Mucosa of descending colon (tissue), 3 donors: ENCODE measurements at regions of chr19 and their contacts with region 1.

Region 1: DNA sequence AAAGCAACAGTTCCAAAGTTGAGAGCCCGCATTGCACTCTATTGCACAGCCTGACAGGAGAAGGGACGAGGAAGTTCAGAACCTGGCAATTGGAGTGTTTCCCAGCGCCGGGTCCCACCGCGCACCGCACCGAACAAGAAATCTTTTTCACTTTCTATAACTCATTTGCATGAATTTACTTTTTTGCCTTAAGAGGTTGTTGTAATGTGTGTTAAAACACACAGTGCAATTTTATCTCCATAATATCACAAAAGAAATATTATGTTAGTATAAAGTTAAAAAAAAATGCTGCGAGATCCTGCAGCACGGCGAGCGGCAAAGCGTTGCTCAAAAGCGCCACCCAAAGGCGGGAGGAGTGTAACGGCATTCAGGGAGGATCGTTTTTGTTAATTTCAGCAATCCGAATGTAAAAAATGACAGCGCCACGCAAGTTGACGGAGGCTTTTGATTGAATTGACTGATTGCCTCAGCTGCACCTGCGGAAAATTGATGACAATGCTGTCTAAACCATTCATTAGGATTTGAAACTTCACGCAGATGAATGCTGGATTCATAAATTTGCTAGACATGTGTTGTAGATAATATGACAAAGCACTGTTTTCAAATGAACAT is 303.6 kb upstream of the ZNF507 start:
- DNase-seq: peak in 2 of 3 donors; percentile 49 to 55
- ATAC-seq: peak; percentile 27
- H3K4me3 ChIP-seq: no peak overlapping the region
- H3K4me1 ChIP-seq: peaks cover 3% of the 10 kb centered on the region
- CTCF ChIP-seq: peak; percentile 58

Region 2: GRCh38 chr19:31676271-31677004 is 365.3 kb before region 1 on chr19:
- intact Hi-C with region 1: loop called in 1 of 2 experiments (anchors 10 kb)
- DNase-seq: peak in 1 of 3 donors; percentile 7
- ATAC-seq: no peak
- H3K4me3 ChIP-seq: no peak overlapping the region
- H3K4me1 ChIP-seq: no peaks in the 10 kb centered on the region
- CTCF ChIP-seq: no peak

Region 3: GRCh38 chr19:32146664-32147063 is 104.9 kb after region 1 on chr19:
- intact Hi-C with region 1: no loop called
- DNase-seq: no peak
- ATAC-seq: no peak
- H3K4me3 ChIP-seq: no peak overlapping the region
- H3K4me1 ChIP-seq: no peaks in the 10 kb centered on the region
- CTCF ChIP-seq: no peak